SK-N-SH (cell line): ENCODE measurements at regions of chr7 and their contacts with region 1.

Region 1: DNA sequence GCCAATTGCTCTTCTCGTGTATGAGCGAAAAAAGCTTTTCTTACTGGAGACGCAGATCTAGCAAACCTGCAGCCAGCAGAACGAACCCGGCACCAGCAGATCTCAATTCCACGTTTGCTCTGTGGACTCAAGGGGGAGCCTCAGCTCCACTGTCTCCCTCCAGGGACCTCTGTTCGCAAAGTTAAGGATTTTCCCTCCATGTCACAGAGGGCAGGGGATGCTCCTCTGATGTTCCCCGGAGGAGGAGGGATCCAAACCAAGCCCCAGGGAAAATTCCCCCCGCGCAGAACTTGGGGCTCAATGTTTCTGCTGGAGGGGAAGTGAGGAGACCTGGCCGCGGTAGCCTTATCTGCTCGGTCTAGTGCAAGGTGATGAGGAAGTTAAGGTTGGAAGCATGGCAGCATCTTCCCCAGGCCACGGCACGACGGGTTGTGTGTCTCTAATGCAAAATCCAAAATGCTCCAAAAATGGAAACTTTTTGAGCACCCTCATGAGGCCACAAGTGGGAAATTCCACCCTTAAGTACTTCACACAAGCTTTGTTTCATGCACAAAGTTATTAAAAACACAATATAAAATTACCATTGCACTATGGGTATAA is 9.0 kb downstream of the IQCE start:
- DNase-seq: peak; percentile 69
- H3K4me3 ChIP-seq: no peak overlapping the region
- H3K27ac ChIP-seq: no peak overlapping the region
- H3K4me1 ChIP-seq: no peaks in the 10 kb centered on the region
- H3K27me3 ChIP-seq: no peaks in the 10 kb centered on the region
- CTCF ChIP-seq: peak; percentile 46
- EP300 ChIP-seq: no peak
- RAD21 ChIP-seq: peak; percentile 82

Region 2: GRCh38 chr7:2537981-2538851 is 29.6 kb before region 1 on chr7:
- CTCF ChIA-PET with region 1: no interaction called
- POLR2A ChIA-PET with region 1: no interaction called
- DNase-seq: peak; percentile 60
- H3K4me3 ChIP-seq: no peak overlapping the region
- H3K27ac ChIP-seq: no peak overlapping the region
- H3K4me1 ChIP-seq: peaks cover 0 to 3% of the 10 kb centered on the region in 2 experiments; a peak in 1 of 4 replicates
- H3K27me3 ChIP-seq: no peaks in the 10 kb centered on the region
- CTCF ChIP-seq: 0 out of 2 replicates have a peak, but pooled peaks have one; percentile 7
- EP300 ChIP-seq: no peak
- RAD21 ChIP-seq: no peak

Region 3: GRCh38 chr7:2585446-2585845 is 17.7 kb after region 1 on chr7:
- CTCF ChIA-PET with region 1: interaction called, 12 read pairs
- POLR2A ChIA-PET with region 1: no interaction called
- DNase-seq: no peak
- H3K4me3 ChIP-seq: no peak overlapping the region
- H3K27ac ChIP-seq: no peak overlapping the region
- H3K4me1 ChIP-seq: no peaks in the 10 kb centered on the region
- H3K27me3 ChIP-seq: no peaks in the 10 kb centered on the region
- CTCF ChIP-seq: no peak
- EP300 ChIP-seq: no peak
- RAD21 ChIP-seq: no peak

Region 4: DNA sequence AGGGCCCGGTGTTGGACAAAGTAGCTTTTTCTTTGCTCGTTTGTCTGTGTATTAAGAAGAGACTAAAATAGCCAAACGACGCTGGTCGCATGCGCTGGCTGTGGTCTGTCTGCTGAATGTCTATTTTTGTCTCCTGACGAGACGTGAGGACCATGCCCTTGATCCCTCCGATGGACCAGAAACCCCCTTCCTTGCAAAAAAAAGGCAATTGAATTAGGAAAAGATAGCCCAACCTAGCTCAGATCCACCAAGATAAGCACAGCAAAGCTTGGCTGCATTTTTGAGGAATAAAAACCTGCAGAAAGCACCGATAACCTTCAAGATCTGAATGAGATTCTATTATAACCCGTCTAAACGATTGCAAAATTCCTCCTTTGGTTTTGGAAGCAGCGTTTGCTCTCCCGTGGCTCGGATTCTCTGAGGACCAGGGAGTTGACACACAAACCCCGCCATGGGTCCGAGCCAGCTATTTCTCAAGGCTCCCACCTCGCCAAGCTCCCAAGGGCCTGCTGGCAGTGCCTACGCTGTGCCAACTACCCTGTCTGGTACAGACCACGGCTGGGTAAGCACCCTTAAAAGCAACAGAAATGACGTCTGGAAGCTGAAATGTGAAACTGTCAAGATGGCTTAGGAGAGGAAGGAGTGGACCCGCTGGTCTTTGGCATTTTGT is 46.3 kb after region 1 on chr7:
- CTCF ChIA-PET with region 1: interaction called, 14 read pairs
- POLR2A ChIA-PET with region 1: no interaction called
- DNase-seq: peak; percentile 77
- H3K4me3 ChIP-seq: no peak overlapping the region
- H3K27ac ChIP-seq: peak overlapping the region in 1 of 2 experiments; percentile 40; a peak in 2 of 4 replicates
- H3K4me1 ChIP-seq: peaks cover 0 to 46% of the 10 kb centered on the region in 2 experiments; a peak in 3 of 4 replicates
- H3K27me3 ChIP-seq: no peaks in the 10 kb centered on the region
- CTCF ChIP-seq: no peak
- EP300 ChIP-seq: no peak
- RAD21 ChIP-seq: no peak

Region 5: DNA sequence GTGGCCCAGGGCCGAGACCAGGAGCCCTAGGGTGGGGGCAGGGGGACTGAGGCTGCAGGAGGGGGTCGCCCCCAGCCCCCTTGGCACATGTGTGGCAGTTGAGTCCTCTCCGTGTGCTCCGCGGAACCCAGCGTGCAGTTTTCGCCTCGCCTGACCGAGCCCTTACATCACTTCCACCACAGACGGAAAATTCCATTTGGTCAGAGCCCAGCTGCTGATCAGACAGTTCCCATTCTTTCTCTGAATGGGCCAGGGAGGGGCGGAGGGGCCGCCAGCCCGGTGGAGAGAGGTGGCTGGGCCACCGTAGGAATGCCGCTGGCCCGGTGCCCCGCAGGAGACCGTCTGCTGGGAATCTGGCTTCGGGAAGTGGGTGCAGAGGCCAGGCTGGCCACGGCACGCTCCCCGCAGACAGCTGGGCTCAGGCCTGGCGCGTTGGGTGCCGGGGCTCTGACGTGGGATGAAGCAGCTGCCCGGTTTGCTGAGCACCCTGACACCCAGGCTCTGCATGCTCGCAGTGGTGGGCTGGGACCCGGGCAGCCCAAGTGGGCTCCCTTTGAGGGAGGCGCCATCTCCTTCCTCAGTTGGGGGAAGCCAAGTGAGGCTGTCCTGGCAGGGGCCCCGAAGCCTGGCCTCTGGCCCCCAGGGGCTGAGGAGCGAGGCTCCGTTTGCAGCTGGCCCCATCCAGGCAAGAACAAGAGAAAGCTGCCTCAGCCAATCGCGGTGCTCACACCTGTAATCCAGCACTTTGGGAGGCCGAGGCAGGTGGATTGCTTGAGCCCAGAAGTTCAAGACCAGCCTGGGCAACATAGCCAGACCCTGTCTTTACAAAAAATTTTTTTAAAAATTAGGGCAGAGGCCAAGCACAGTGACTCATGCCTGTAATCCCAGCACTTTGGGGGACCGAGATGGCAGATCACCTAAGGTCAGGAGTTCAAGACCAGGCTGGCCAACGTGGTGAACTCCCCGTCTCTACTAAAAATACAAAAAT is 73.9 kb after region 1 on chr7:
- CTCF ChIA-PET with region 1: interaction called, 10 read pairs
- POLR2A ChIA-PET with region 1: no interaction called
- DNase-seq: peak; percentile 75
- H3K4me3 ChIP-seq: no peak overlapping the region
- H3K27ac ChIP-seq: peak overlapping the region; percentile 71 to 95
- H3K4me1 ChIP-seq: peaks cover 61 to 91% of the 10 kb centered on the region in 2 experiments
- H3K27me3 ChIP-seq: no peaks in the 10 kb centered on the region
- CTCF ChIP-seq: no peak
- EP300 ChIP-seq: peak; percentile 40 to 82; a peak in 2 of 4 replicates
- RAD21 ChIP-seq: no peak